Breast epithelium (tissue), 4 donors: ENCODE measurements at regions of chr2 and their contacts with region 1.

Region 1: DNA sequence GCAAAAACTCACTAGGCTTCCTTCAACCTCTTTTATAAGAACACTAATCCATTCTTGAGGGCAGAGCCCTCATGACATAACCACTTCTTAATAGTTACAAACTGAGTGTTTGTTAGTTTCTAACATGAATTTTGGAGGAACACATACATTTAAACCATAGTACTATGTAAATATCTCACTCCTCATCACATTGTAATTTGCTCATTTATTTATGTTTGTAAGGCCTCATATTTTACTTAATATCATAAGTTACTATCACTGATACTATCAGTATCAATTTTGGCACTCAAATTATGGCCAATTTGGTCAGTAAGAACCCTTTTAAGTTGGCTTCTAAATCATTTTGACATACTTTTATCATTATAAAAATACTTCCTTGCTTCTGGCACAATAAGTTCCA is 603.1 kb downstream of the ZEB2 start:
- DNase-seq: no peak
- H3K4me3 ChIP-seq: no peak overlapping the region
- H3K27ac ChIP-seq: no peak overlapping the region
- H3K4me1 ChIP-seq: no peaks in the 10 kb centered on the region
- H3K27me3 ChIP-seq: no peaks in the 10 kb centered on the region
- CTCF ChIP-seq: no peak
- POLR2A ChIP-seq: no peak

Region 2: GRCh38 chr2:144183727-144184126 is 266.9 kb after region 1 on chr2:
- intact Hi-C with region 1: loop called (anchors 5 kb)
- DNase-seq: peak in 1 of 2 donors; percentile 17
- H3K4me3 ChIP-seq: peak overlapping the region in 2 of 3 donors; percentile 19 to 38
- H3K27ac ChIP-seq: no peak overlapping the region
- H3K4me1 ChIP-seq: no peaks in the 10 kb centered on the region
- H3K27me3 ChIP-seq: no peaks in the 10 kb centered on the region
- CTCF ChIP-seq: no peak
- POLR2A ChIP-seq: no peak

Region 3: DNA sequence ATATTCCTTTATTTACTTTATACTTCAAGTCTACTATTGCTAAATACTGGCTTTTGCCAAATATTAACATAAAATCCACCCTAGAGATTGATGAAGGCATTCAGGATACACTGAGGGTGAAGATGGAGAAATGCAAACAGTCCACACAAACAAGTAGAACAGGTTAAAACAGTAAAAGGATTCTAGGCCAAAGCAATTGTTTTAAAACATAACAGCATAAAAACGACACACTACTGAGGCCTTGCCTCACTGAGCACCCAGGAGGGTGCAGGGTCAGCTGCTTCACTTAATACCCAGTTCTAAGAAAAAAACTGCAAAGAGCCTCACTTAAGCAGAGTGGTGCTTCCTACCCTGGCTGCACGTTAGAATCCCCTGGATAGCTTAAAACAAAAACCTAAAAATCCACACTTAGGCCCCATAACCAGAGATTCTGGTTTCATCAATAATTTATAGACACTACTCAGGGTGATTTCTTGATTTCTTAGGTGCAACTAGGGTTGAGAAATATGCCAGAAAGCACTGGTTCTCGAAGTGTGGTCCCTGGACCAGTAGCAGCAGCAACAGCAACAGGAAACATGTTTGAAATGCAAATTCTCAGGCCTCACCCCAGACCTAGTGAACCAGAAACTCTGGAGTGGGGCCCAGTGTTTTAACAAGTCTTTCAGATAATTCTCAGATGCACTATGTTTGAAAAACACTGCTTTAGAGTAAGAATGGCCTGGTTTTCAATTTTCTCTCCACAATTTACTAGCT is 324.0 kb after region 1 on chr2:
- intact Hi-C with region 1: no loop called
- DNase-seq: no peak
- H3K4me3 ChIP-seq: no peak overlapping the region
- H3K27ac ChIP-seq: no peak overlapping the region
- H3K4me1 ChIP-seq: no peaks in the 10 kb centered on the region
- H3K27me3 ChIP-seq: no peaks in the 10 kb centered on the region
- CTCF ChIP-seq: no peak
- POLR2A ChIP-seq: no peak

Region 4: GRCh38 chr2:144510294-144510991 is 593.7 kb after region 1 on chr2:
- intact Hi-C with region 1: no loop called
- DNase-seq: no peak
- H3K4me3 ChIP-seq: peak overlapping the region in 2 of 3 donors; percentile 23 to 79
- H3K27ac ChIP-seq: peak overlapping the region; percentile 11 to 98
- H3K4me1 ChIP-seq: no peaks in the 10 kb centered on the region
- H3K27me3 ChIP-seq: peaks cover 0 to 36% of the 10 kb centered on the region in 2 donors
- CTCF ChIP-seq: no peak
- POLR2A ChIP-seq: no peak